ENCODE measurements at regions of chr16 and their contacts with region 1.

Region 1: DNA sequence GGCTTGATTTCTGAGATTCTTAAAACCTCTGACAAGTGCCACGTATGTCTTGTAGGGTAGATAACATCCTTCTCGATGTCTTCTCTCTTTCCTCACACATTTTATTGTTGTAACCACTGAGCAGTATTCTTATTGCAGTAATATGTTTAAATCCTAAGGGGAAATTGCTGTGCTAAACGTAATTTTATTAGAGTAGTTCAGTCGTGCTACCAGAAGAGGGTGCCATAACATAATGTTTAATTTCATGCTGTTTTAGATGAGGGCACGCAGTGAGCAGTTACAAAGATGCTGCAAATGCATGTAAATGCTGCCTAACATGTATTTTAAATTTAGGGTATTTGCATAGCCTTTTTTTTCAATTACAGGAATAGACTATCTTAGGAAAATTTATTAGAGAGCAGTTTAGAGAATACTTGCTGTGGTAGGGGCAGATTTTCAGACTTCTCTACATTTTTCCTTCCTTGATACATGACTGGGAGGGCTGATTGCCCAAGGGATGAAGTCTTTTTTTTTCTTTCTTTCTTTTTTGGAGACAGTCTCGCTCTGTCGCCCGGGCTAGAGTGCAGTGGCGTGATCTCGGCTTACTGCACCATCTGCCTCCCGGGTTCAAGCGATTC is 51.7 kb downstream of the GAN start:
- DNase-seq: peak; percentile 9
- H3K4me3 Mint-ChIP-seq: no peak overlapping the region
- H3K27ac Mint-ChIP-seq: no peak overlapping the region
- H3K4me1 Mint-ChIP-seq: no peaks in the 10 kb centered on the region
- H3K27me3 Mint-ChIP-seq: no peaks in the 10 kb centered on the region

Region 2: GRCh38 chr16:81204798-81205680 is 161.4 kb before region 1 on chr16:
- CTCF ChIA-PET with region 1: interaction called, 4 read pairs
- intact Hi-C with region 1: loop called (anchors 5 kb)
- DNase-seq: peak; percentile 43
- H3K4me3 Mint-ChIP-seq: no peak overlapping the region
- H3K27ac Mint-ChIP-seq: no peak overlapping the region
- H3K4me1 Mint-ChIP-seq: no peaks in the 10 kb centered on the region
- H3K27me3 Mint-ChIP-seq: peaks cover 3% of the 10 kb centered on the region

Region 3: GRCh38 chr16:81314603-81315270 is 51.7 kb before region 1 on chr16 and contains the start of gene GAN:
- CTCF ChIA-PET with region 1: no interaction called
- intact Hi-C with region 1: no loop called
- DNase-seq: peak; percentile 97
- H3K4me3 Mint-ChIP-seq: peak within 1 kb of the TSS; percentile 97
- H3K27ac Mint-ChIP-seq: peak within 1 kb of the TSS; percentile 83
- H3K4me1 Mint-ChIP-seq: peaks cover 65% of the 10 kb centered on the region
- H3K27me3 Mint-ChIP-seq: no peaks in the 10 kb centered on the region
- total RNA-seq, gene GAN: 10.6 to 11.3 TPM

Region 4: GRCh38 chr16:81384006-81384405 is 17.6 kb after region 1 on chr16:
- CTCF ChIA-PET with region 1: interaction called, 13 read pairs
- intact Hi-C with region 1: no loop called
- DNase-seq: no peak
- H3K4me3 Mint-ChIP-seq: no peak overlapping the region
- H3K27ac Mint-ChIP-seq: no peak overlapping the region
- H3K4me1 Mint-ChIP-seq: no peaks in the 10 kb centered on the region
- H3K27me3 Mint-ChIP-seq: no peaks in the 10 kb centered on the region

Region 5: GRCh38 chr16:81403616-81404373 is 37.4 kb after region 1 on chr16:
- CTCF ChIA-PET with region 1: interaction called, 5 read pairs
- intact Hi-C with region 1: loop called (anchors 2 kb)
- DNase-seq: peak; percentile 89
- H3K4me3 Mint-ChIP-seq: no peak overlapping the region
- H3K27ac Mint-ChIP-seq: no peak overlapping the region
- H3K4me1 Mint-ChIP-seq: no peaks in the 10 kb centered on the region
- H3K27me3 Mint-ChIP-seq: no peaks in the 10 kb centered on the region

Region 6: GRCh38 chr16:81723098-81723723 is 356.8 kb after region 1 on chr16:
- CTCF ChIA-PET with region 1: interaction called, 16 read pairs
- intact Hi-C with region 1: loop called (anchors 1 kb)
- DNase-seq: peak; percentile 53
- H3K4me3 Mint-ChIP-seq: no peak overlapping the region
- H3K27ac Mint-ChIP-seq: no peak overlapping the region
- H3K4me1 Mint-ChIP-seq: peaks cover 3% of the 10 kb centered on the region
- H3K27me3 Mint-ChIP-seq: no peaks in the 10 kb centered on the region

Region 7: DNA sequence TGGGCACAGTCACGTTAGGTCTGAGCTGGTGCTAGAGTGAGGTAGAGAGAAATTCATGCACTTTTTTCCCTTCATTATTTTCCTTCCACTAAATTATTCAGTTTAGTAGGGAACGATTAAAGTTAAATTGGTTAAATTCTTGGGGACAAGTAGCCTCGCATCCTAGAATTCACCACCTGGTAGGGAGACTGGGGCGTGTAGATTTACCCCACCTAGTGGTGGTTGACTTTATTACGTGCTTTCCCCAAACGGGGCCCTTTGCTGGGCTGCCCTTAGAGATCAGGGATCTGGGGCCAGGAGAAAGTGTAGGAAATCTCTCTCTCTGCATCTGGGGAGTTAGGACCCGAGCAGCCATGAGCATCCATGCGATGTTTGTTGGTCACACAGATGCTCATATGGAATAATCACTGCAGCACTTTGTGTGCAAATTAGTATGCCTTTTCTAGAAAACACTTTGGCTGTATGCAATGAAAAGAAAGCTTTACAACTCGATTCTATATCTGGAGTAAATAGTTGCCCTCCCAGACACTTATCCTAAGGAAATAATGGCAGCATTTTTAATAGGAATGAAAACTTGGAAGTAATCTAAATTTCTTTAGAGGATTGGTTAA is 519.7 kb after region 1 on chr16:
- CTCF ChIA-PET with region 1: interaction called, 3 read pairs
- intact Hi-C with region 1: loop called (anchors 5 kb)
- DNase-seq: peak; percentile 35
- H3K4me3 Mint-ChIP-seq: no peak overlapping the region
- H3K27ac Mint-ChIP-seq: no peak overlapping the region
- H3K4me1 Mint-ChIP-seq: no peaks in the 10 kb centered on the region
- H3K27me3 Mint-ChIP-seq: no peaks in the 10 kb centered on the region

Measured in activated naive CD4-positive, alpha-beta T cell treated with anti-CD3 and anti-CD28 coated beads for 36 hours (primary cell).